PC-3 (cell line): ENCODE measurements at regions of chr12 and their contacts with region 1.

Region 1: DNA sequence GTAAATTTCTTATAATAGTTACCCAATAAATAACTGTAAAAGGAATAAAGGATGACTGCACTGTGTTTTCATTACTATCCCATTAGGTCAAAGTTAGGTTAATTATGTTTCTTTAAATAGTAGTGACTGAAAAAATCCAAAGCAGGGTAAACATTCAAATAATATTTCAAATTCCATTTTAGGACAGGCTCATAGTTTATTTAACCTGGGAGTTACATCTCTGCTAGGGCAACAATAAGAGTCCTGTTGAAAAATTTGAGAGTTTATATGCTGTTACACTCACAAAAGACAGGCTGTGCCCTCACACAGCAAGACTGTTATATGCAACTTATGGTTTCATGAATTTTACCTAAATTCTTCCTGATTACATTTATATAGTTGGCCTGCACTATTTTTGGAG is 8.0 kb downstream of the ERP27 start:
- DNase-seq: peak; percentile 7
- ATAC-seq: no peak
- H3K4me3 ChIP-seq: no peak overlapping the region
- H3K27ac ChIP-seq: no peak overlapping the region
- H3K4me1 ChIP-seq: peaks cover 67% of the 10 kb centered on the region
- H3K27me3 ChIP-seq: no peaks in the 10 kb centered on the region
- CTCF ChIP-seq: no peak

Region 2: DNA sequence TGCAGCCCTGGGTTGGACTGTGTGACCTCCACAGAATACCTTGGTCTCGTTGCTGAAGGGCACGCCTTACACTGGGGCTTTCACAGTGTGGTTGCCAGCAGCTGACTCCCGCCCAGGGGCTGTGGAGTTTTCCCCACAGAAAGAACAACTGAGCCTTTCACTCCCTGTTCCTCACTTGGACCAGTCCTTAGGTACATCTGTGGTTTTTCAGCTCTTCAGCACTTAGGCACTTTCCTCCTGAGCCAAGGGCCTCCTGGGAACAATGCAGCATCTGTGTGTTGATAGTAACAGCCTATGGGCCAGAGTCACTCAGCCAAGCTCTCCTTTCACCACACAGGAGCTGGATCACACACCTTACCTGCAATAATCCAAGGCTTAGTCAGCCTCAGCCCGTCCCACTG is 16.9 kb before region 1 on chr12:
- CTCF ChIA-PET with region 1: no interaction called
- POLR2A ChIA-PET with region 1: no interaction called
- intact Hi-C with region 1: no loop called
- DNase-seq: peak; percentile 65
- ATAC-seq: peak; percentile 53
- H3K4me3 ChIP-seq: no peak overlapping the region
- H3K27ac ChIP-seq: peak overlapping the region; percentile 36
- H3K4me1 ChIP-seq: peaks cover 27% of the 10 kb centered on the region
- H3K27me3 ChIP-seq: no peaks in the 10 kb centered on the region
- CTCF ChIP-seq: no peak

Region 3: GRCh38 chr12:14960548-14961465 is 30.5 kb after region 1 on chr12:
- CTCF ChIA-PET with region 1: no interaction called
- POLR2A ChIA-PET with region 1: no interaction called
- intact Hi-C with region 1: loop called (anchors 2 kb)
- DNase-seq: peak; percentile 66
- ATAC-seq: peak; percentile 93
- H3K4me3 ChIP-seq: peak overlapping the region; percentile 59; the same call in 1 of the 2 replicates
- H3K27ac ChIP-seq: peak overlapping the region; percentile 87
- H3K4me1 ChIP-seq: peaks cover 17% of the 10 kb centered on the region
- H3K27me3 ChIP-seq: no peaks in the 10 kb centered on the region
- CTCF ChIP-seq: no peak